Activated CD4-positive, alpha-beta T cell treated with anti-CD3 and anti-CD28 coated beads for 36 hours (primary cell): ENCODE measurements at regions of chr14 and their contacts with region 1.

Region 1: GRCh38 chr14:22570132-22570949 is 18.7 kb downstream of the DAD1 start:
- DNase-seq: peak; percentile 89
- ATAC-seq: peak; percentile 80
- H3K4me3 Mint-ChIP-seq: peak overlapping the region; percentile 90
- H3K27ac Mint-ChIP-seq: peak overlapping the region; percentile 100
- H3K4me1 Mint-ChIP-seq: peaks cover 79% of the 10 kb centered on the region
- H3K27me3 Mint-ChIP-seq: no peaks in the 10 kb centered on the region

Region 2: DNA sequence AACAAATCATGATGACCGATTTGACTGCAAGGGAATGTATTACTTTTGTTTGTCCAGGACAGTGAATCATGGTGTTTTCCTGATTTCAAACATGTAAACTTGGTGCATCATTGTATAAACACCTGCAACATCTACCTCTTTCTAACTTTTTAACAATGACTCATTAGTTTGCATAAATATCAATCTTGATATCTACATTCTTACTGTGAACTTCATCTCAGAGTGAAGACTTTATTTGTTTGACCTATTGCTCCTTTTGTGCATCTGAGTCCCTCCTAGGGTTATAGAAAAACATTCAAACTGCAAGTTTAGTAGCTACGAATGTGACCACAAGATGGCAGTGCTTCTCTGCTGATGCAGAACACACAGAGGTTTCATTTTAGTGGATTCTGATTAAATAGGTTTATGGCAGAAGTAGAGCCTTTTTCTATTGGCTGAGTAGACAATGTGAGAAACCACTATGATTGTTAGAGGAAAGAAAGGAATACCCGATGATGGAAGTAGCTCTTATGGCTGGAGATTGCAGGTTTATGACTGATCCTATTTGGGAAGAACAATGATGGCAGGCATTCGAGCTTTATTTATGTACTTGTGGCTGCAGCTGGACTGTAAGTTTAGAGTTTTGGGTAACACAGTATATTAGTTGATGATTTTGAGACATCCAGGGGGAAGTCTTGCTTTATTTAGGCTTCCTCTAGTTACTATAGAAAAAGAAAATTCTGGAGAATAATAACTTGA is 652.5 kb before region 1 on chr14:
- CTCF ChIA-PET with region 1: interaction called, 39 read pairs
- POLR2A ChIA-PET with region 1: interaction called, 3 read pairs
- intact Hi-C with region 1: no loop called
- DNase-seq: peak; percentile 74
- ATAC-seq: peak; percentile 57
- H3K4me3 Mint-ChIP-seq: peak overlapping the region; percentile 65
- H3K27ac Mint-ChIP-seq: peak overlapping the region; percentile 69
- H3K4me1 Mint-ChIP-seq: peaks cover 57% of the 10 kb centered on the region
- H3K27me3 Mint-ChIP-seq: no peaks in the 10 kb centered on the region

Region 3: GRCh38 chr14:22200977-22201605 is 369.2 kb before region 1 on chr14:
- CTCF ChIA-PET with region 1: interaction called, 12 read pairs
- POLR2A ChIA-PET with region 1: no interaction called
- intact Hi-C with region 1: no loop called
- DNase-seq: no peak
- ATAC-seq: peak; percentile 73
- H3K4me3 Mint-ChIP-seq: no peak overlapping the region
- H3K27ac Mint-ChIP-seq: no peak overlapping the region
- H3K4me1 Mint-ChIP-seq: peaks cover 15% of the 10 kb centered on the region
- H3K27me3 Mint-ChIP-seq: no peaks in the 10 kb centered on the region

Region 4: GRCh38 chr14:22263897-22264296 is 306.4 kb before region 1 on chr14:
- CTCF ChIA-PET with region 1: no interaction called
- POLR2A ChIA-PET with region 1: no interaction called
- intact Hi-C with region 1: no loop called
- DNase-seq: no peak
- ATAC-seq: no peak
- H3K4me3 Mint-ChIP-seq: no peak overlapping the region
- H3K27ac Mint-ChIP-seq: no peak overlapping the region
- H3K4me1 Mint-ChIP-seq: peaks cover 4% of the 10 kb centered on the region
- H3K27me3 Mint-ChIP-seq: no peaks in the 10 kb centered on the region

Region 5: GRCh38 chr14:22491683-22492621 is 78.4 kb before region 1 on chr14:
- CTCF ChIA-PET with region 1: no interaction called
- POLR2A ChIA-PET with region 1: no interaction called
- intact Hi-C with region 1: no loop called
- DNase-seq: peak; percentile 65
- ATAC-seq: peak; percentile 37
- H3K4me3 Mint-ChIP-seq: peak overlapping the region; percentile 84
- H3K27ac Mint-ChIP-seq: peak overlapping the region; percentile 99
- H3K4me1 Mint-ChIP-seq: peaks cover 7% of the 10 kb centered on the region
- H3K27me3 Mint-ChIP-seq: no peaks in the 10 kb centered on the region

Region 6: DNA sequence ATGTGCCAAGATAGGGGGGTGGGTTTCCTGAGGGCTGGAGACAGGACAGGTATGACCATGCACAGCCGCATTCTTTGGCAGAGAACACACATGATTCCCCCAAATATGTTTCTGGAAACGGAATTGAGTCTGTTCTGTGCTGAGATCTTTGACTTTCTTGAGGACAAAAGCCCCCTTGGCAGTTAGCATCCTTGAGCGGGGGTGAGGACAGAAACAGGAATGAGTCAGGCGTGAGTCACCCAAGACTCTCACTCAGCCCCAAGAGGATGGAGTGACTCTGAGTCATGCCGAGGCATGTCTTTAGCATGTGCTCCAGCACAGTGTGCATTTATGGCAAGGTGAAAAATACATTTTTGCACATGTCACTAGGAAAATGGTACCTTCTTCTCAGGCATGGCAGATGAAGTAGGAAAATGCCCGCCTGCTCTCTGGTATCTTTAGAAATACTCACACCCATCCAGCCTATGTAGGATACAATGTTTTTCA is 33.4 kb before region 1 on chr14:
- CTCF ChIA-PET with region 1: interaction called, 21 read pairs
- POLR2A ChIA-PET with region 1: interaction called, 4 read pairs
- intact Hi-C with region 1: loop called in 1 of 2 experiments (anchors 5 kb)
- DNase-seq: peak; percentile 94
- ATAC-seq: peak; percentile 84
- H3K4me3 Mint-ChIP-seq: peak overlapping the region; percentile 84
- H3K27ac Mint-ChIP-seq: peak overlapping the region; percentile 99
- H3K4me1 Mint-ChIP-seq: peaks cover 95% of the 10 kb centered on the region
- H3K27me3 Mint-ChIP-seq: no peaks in the 10 kb centered on the region

Region 7: DNA sequence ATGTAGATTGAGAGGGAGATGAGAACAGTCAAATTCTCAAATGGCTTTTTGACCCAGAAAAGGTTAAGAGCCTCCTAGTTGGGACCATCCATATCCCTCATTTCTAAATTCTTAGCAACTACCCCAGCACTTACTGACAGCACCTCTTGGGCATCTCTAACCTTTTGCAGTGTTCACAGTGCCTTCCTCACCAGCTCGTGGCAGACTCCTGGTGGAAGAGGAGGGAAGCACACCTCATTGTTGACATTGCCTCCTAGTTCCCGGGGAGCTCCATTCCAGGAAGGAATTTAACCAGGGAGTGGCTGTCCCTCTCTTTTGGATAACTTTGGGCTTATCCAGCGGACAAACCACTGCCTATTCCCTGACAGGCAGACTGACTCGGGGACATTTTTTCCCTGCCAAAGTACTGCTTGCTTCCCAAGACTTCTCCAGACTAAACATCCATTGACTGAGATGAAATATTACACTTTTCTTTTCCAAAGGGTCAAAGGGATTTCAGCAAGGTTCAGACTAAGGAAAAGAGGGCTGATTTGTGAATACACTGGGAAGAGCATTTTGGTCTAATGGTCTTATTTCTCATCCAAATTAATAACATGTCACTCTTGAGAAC is 82.8 kb after region 1 on chr14:
- CTCF ChIA-PET with region 1: interaction called, 106 read pairs
- POLR2A ChIA-PET with region 1: interaction called, 4 read pairs
- intact Hi-C with region 1: loop called (anchors 1 kb)
- DNase-seq: peak; percentile 75
- ATAC-seq: peak; percentile 80
- H3K4me3 Mint-ChIP-seq: no peak overlapping the region
- H3K27ac Mint-ChIP-seq: no peak overlapping the region
- H3K4me1 Mint-ChIP-seq: no peaks in the 10 kb centered on the region
- H3K27me3 Mint-ChIP-seq: no peaks in the 10 kb centered on the region

Region 8: DNA sequence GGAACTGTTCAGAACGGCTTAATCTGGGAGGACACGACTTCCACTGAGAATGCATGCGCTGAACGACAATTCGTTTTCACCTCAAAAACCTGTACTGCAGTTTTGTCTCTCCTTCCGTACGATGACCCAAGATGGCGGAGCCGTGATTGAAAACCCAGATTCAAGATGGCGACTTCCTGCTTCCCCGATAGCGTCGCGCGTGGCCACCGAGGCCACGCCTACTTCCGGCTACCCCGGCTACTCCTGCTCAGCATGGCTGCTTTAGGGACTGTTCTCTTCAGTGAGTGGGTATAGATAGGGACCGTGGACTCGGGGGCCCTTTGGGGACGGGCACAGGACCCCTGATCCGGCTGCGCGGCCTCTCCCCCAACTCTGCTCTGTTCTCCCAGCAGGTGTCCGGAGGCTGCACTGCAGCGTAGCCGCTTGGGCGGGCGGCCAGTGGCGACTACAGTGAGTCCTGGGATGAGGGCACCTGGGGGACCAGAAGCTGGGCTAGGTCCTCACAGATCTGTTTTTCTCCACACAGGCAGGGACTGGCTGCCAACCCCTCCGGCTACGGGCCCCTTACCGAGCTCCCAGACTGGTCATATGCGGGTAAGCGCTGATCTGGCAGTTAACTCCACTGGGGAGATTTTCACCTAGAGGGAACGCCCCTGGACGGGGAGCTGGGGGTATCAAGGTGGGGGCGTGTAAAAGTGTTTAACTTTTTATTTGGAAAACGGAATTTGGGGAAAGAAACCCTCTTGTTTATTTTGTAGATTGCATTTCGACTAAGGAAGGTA is 259.5 kb after region 1 on chr14 and contains the start of gene MRPL52:
- CTCF ChIA-PET with region 1: interaction called, 27 read pairs
- POLR2A ChIA-PET with region 1: no interaction called
- intact Hi-C with region 1: no loop called
- DNase-seq: peak; percentile 94
- ATAC-seq: peak; percentile 92
- H3K4me3 Mint-ChIP-seq: peak within 1 kb of the TSS; percentile 82
- H3K27ac Mint-ChIP-seq: peak within 1 kb of the TSS; percentile 98
- H3K4me1 Mint-ChIP-seq: peaks cover 26% of the 10 kb centered on the region
- H3K27me3 Mint-ChIP-seq: no peaks in the 10 kb centered on the region
- total RNA-seq, gene MRPL52: 115 to 136 TPM

Region 9: DNA sequence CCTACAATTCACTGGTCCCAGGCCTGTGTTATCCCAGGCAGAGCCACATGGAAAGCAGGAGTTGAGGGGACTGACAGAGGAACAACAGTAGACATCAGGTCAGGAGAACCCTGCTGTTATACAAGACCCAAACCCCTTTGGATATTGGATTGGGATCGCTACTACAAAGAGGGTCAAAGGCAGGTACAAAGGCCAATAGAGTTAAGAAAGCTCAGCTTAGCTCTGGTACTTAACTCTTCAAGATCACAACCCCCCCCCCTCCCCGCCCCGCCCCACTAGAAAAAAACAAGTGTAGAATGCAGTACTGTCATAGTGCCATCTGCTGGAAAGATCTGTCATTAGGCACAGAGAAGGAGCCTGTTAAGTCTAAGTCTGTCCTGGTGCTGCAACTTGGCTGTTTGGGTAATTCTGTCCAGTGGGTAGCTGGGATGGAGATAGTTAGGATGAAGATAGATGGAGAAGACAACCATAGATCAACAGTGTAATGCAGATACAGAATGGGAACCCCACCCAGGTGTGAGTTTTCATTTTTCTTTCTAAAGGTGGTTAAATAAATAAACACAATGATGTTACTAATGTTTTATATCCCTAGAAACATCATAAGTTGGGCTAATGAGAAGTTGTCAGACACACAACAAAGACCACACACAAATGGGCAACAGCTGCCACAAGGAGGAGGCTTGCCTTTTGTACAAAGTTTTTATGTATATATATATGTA is 329.9 kb after region 1 on chr14:
- CTCF ChIA-PET with region 1: interaction called, 15 read pairs
- POLR2A ChIA-PET with region 1: interaction called, 4 read pairs
- intact Hi-C with region 1: loop called in 1 of 2 experiments (anchors 1 kb)
- DNase-seq: peak; percentile 57
- ATAC-seq: peak; percentile 69
- H3K4me3 Mint-ChIP-seq: no peak overlapping the region
- H3K27ac Mint-ChIP-seq: peak overlapping the region; percentile 0
- H3K4me1 Mint-ChIP-seq: peaks cover 16% of the 10 kb centered on the region
- H3K27me3 Mint-ChIP-seq: no peaks in the 10 kb centered on the region